Transverse colon (tissue), 4 donors: ENCODE measurements at regions of chr16 and their contacts with region 1.

Region 1: GRCh38 chr16:22641131-22641628 is 130.5 kb downstream of the NPIPB5 start:
- DNase-seq: no peak
- H3K4me3 ChIP-seq: no peak overlapping the region
- H3K27ac ChIP-seq: no peak overlapping the region
- H3K4me1 ChIP-seq: no peaks in the 10 kb centered on the region
- H3K27me3 ChIP-seq: peaks cover 17% of the 10 kb centered on the region
- CTCF ChIP-seq: no peak
- EP300 ChIP-seq: no peak
- POLR2A ChIP-seq: no peak

Region 2: DNA sequence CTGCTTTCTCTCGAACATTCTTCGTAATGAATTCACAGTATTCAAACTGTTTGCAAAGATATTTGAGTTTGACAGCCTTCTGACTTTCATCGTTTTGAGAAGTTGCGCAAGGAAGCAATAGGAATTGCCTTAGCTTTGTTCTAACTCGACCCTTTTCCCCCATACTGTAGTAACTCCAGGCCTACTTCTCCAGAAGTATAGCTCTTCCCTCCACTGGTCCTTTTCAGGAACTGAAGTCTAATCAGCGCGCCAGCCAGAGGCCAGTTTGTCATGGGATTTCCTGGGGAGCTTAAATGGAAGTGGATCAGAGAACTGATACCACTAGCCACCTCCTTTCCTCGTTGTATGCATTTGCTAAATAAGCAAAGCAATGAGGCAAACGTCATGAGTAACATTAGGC is 294.7 kb before region 1 on chr16:
- in situ Hi-C with region 1: loop called in 1 of 4 experiments (anchors 25 kb)
- intact Hi-C with region 1: no loop called
- DNase-seq: no peak
- H3K4me3 ChIP-seq: no peak overlapping the region
- H3K27ac ChIP-seq: peak overlapping the region; percentile 21 to 71 (median 60)
- H3K4me1 ChIP-seq: peaks cover 0 to 5% (median 0%) of the 10 kb centered on the region in 4 donors
- H3K27me3 ChIP-seq: no peaks in the 10 kb centered on the region
- CTCF ChIP-seq: no peak
- EP300 ChIP-seq: no peak
- POLR2A ChIP-seq: no peak